Common myeloid progenitor, CD34-positive (primary cell): ENCODE measurements at regions of chr4 and their contacts with region 1.

Region 1: DNA sequence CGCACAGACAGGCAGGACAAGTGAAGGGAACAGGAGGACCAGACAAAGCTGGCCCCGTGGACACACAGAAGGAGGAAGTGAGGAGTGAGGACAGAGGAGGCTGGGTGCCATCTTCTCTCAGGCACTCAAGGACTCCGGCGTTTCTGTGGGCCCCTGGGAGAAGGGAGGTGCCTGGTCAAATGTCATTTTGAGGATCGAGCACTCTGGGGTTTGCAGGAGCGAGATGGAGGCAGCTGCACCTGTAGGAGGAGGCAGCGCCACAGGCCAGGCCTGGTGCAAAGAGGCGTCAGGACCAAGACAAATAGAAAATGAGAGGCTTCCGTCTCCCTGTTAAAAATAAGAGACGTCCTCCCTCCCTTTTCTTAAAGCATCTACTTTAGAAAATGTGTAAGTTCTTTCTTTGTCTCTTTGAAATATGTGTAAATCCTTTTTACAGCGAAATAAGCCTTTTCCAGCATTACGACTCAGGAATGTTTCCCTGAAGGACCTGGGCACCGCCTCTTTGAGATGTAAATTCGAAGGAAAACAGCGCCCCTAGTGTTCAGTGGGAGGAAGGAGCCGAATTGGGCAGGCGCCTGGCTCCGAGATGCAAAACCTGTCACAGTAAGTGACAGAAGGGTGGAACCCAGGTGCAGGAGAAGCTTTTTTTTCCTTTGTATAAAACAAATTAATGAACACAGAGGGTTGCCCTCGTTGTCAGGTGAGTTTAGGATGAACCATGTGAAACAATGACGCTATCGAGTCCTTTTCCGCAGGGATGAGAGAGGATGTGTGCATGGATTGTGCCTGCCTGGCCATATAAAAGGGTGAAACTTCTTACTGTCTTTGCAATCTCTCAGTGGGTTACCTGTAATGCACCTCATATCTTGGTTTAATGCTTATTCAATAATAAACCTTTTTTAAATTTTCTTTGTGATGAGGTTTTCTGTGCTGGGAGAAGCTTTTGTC is 1.4 kb upstream of the C4orf50 start:
- DNase-seq: peak; percentile 48 to 66 (median 60)
- H3K4me3 ChIP-seq: no peak overlapping the region
- H3K27ac ChIP-seq: no peak overlapping the region
- H3K4me1 ChIP-seq: no peaks in the 10 kb centered on the region
- H3K27me3 ChIP-seq: peaks cover 0 to 3% (median 0%) of the 10 kb centered on the region in 5 experiments

Region 2: DNA sequence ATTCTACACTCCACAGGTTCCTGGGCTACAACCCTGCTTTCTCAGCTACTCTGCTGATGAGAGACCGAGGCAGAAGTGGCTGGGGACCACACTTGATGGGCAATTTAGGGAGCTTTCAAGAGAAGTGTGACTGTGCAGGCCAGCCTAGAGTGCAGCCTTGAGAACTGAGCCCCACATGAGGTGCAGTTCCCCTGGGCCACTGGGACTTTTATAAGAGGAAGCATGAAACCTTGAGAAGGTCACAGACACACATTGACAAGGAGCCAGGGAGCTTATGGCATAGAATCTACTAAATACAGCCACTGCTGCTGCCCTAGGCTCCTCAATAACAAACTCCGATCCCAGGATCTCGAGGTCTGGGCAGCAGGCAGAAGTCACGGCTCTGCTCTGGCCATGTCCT is 14.4 kb before region 1 on chr4:
- CTCF ChIA-PET with region 1: interaction called, 59 read pairs
- POLR2A ChIA-PET with region 1: no interaction called
- DNase-seq: no peak
- H3K4me3 ChIP-seq: no peak overlapping the region
- H3K27ac ChIP-seq: no peak overlapping the region
- H3K4me1 ChIP-seq: peaks cover 0 to 4% (median 3%) of the 10 kb centered on the region in 4 experiments
- H3K27me3 ChIP-seq: peaks cover 0 to 40% (median 11%) of the 10 kb centered on the region in 5 experiments

Region 3: DNA sequence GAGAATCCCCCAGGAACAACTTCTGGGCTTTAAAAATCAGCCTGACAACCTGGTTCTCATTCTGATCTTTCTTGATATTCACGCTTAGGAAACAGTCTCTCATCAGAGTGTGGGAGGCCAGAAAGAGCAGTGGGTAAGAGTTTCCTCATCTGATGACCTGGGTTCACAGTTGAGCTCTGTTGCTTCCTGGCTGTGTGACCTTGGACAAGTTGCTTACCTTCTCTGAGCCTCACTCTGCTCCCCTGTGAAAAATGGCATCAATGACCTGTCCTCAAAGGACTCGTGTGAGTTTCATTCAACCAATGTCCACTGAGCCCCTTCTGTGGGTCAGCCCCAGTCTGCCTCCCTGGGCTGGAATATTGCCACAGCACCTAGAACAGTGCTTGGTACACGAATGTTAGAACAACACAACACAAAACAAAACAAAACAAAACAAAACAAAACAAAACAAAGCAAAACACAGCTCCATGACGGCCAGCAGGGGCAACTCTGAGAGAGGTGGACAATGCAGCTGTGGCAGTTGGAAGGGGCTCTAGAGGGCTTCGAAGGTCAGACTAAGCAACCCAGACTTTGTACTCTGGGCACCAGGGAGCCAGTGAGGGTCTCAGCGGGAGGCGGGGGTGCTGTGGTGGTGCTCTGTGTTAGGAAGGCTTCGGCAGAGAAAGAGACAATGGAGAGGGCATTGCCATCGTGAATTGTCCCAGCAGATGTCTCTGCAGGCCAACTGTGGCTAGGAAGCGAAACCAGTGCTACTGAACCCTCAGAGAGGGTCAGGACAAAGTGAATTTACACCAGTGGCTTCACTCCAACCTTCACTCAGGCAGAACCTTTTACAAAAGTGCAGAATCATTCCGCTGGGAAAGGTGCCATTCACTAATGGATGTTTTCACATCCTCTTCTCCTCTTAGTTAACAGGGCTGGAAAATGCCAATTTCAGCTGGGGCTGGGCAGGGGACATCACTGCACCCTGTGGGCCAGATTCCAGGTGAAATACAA is 13.0 kb after region 1 on chr4:
- CTCF ChIA-PET with region 1: interaction called, 10 read pairs
- POLR2A ChIA-PET with region 1: no interaction called
- DNase-seq: peak; percentile 78 to 84 (median 81)
- H3K4me3 ChIP-seq: no peak overlapping the region
- H3K27ac ChIP-seq: no peak overlapping the region
- H3K4me1 ChIP-seq: peaks cover 0 to 15% (median 3%) of the 10 kb centered on the region in 4 experiments
- H3K27me3 ChIP-seq: peaks cover 0 to 3% (median 0%) of the 10 kb centered on the region in 5 experiments